CD4-positive, alpha-beta memory T cell (primary cell): ENCODE measurements at regions of chr3 and their contacts with region 1.

Region 1: GRCh38 chr3:188954590-188955208 is 217.1 kb upstream of the TPRG1 start:
- DNase-seq: peak; percentile 48 to 76 (median 68)
- H3K4me3 ChIP-seq: no peak overlapping the region
- H3K4me3 Mint-ChIP-seq: no peak overlapping the region
- H3K27ac ChIP-seq: no peak overlapping the region
- H3K27ac Mint-ChIP-seq: peak overlapping the region in 1 of 7 donors; percentile 45
- H3K4me1 ChIP-seq: no peaks in the 10 kb centered on the region
- H3K4me1 Mint-ChIP-seq: no peaks in the 10 kb centered on the region
- H3K27me3 ChIP-seq: no peaks in the 10 kb centered on the region
- H3K27me3 Mint-ChIP-seq: no peaks in the 10 kb centered on the region

Region 2: DNA sequence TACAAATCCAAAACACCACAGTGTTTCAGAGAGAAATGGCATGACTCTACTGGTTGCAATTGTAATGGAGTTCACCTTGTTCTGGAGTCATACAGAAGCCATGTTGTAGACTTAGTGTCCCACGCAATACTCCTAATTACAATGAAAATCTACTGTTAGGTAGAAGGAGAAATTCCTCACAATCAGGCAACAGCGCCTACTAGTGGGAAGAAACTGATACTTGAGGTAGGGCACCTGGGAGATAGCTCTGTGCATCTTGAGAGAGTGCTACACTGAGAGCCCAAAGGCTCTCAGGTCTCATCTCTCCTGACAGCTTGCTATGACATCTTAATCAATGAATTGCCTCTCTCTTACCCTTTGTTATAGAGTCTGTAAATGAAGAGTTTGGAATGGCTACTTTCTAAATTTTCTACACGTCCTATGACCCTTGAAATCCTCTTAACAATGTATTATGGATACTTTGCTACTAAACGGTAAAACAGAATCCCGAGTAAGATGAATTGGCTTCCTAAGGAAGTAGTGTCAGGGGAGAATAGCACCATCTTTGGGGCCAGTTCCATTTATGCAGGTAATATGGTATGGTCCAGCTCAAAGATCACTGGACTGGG is 205.6 kb before region 1 on chr3:
- CTCF ChIA-PET with region 1: interaction called, 23 read pairs
- POLR2A ChIA-PET with region 1: no interaction called
- intact Hi-C with region 1: loop called (anchors 1 kb)
- DNase-seq: peak; percentile 55 to 63 (median 59)
- H3K4me3 ChIP-seq: no peak overlapping the region
- H3K4me3 Mint-ChIP-seq: no peak overlapping the region
- H3K27ac ChIP-seq: no peak overlapping the region
- H3K27ac Mint-ChIP-seq: no peak overlapping the region
- H3K4me1 ChIP-seq: no peaks in the 10 kb centered on the region
- H3K4me1 Mint-ChIP-seq: peaks cover 0 to 5% (median 0%) of the 10 kb centered on the region in 4 donors
- H3K27me3 ChIP-seq: no peaks in the 10 kb centered on the region
- H3K27me3 Mint-ChIP-seq: no peaks in the 10 kb centered on the region

Region 3: DNA sequence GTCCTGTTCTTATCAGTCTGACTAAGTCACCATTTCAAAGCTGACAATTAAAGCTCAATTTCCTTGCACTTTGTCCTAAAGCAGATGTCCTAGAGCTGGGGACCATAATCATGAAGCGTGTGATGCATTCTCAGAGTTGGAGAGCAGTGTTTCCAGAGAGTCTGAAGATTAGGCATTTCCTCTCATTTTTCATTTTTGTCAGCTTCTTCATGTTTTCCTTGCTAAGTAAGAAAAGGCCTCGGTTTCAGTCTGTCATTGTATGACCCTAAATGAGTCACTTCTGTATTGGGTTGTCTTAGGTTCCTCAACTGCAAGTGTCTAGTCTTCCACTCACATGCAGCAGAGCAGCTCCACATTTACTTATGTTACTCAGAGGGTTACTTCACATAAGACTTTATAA is 40.1 kb before region 1 on chr3:
- CTCF ChIA-PET with region 1: interaction called, 18 read pairs
- POLR2A ChIA-PET with region 1: no interaction called
- intact Hi-C with region 1: no loop called
- DNase-seq: no peak
- H3K4me3 ChIP-seq: no peak overlapping the region
- H3K4me3 Mint-ChIP-seq: no peak overlapping the region
- H3K27ac ChIP-seq: no peak overlapping the region
- H3K27ac Mint-ChIP-seq: peak overlapping the region in 3 of 7 donors; percentile 17 to 62 (median 58)
- H3K4me1 ChIP-seq: peaks cover 22% of the 10 kb centered on the region
- H3K4me1 Mint-ChIP-seq: peaks cover 24 to 37% (median 31%) of the 10 kb centered on the region in 4 donors
- H3K27me3 ChIP-seq: no peaks in the 10 kb centered on the region
- H3K27me3 Mint-ChIP-seq: no peaks in the 10 kb centered on the region

Region 4: DNA sequence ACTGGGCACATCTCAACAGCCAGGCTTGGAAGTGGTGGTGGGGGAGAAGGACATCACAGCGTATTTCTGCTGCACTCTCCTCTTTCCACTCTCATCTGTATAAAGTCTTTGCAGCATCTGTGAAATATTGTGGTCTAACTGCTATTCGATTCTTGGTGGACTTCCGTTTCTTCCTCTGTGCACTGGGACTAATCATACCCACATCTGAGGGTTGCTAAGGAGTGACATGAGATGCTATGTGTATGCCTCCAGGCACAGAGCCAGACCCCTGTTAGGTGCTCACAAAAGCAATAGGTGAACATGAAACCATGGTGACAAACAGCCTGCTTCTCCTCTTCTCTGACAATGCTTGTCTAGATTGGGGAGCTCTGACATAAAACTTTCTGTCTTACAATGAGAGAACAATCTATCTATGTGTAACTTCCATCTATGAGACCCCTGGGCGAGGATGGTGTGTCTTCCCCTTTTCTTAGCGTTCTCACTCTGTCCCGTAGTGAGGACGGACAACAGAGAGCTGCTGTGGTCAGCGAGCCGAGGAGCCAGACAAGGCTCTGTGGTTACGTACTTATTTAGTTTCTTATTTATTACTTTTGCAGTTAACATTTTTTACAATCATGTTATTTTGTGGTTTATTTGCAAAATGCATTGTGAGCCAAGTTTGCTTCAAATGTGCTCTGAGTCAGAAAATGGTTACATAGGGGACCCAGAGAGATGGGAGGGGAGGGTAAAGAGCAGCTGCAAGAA is 20.3 kb after region 1 on chr3:
- CTCF ChIA-PET with region 1: interaction called, 13 read pairs
- POLR2A ChIA-PET with region 1: no interaction called
- intact Hi-C with region 1: no loop called
- DNase-seq: peak; percentile 24 to 52 (median 41)
- H3K4me3 ChIP-seq: peak overlapping the region in 1 of 2 donors; percentile 6
- H3K4me3 Mint-ChIP-seq: peak overlapping the region; percentile 8 to 47 (median 26)
- H3K27ac ChIP-seq: no peak overlapping the region
- H3K27ac Mint-ChIP-seq: peak overlapping the region in 6 of 7 donors; percentile 52 to 90 (median 72)
- H3K4me1 ChIP-seq: peaks cover 16% of the 10 kb centered on the region
- H3K4me1 Mint-ChIP-seq: peaks cover 12 to 35% (median 23%) of the 10 kb centered on the region in 4 donors
- H3K27me3 ChIP-seq: no peaks in the 10 kb centered on the region
- H3K27me3 Mint-ChIP-seq: no peaks in the 10 kb centered on the region

Region 5: GRCh38 chr3:189123595-189124387 is 169.1 kb after region 1 on chr3:
- CTCF ChIA-PET with region 1: interaction called, 13 read pairs
- POLR2A ChIA-PET with region 1: no interaction called
- intact Hi-C with region 1: no loop called
- DNase-seq: no peak
- H3K4me3 ChIP-seq: no peak overlapping the region
- H3K4me3 Mint-ChIP-seq: peak overlapping the region in 6 of 8 donors; percentile 73 to 85 (median 78)
- H3K27ac ChIP-seq: no peak overlapping the region
- H3K27ac Mint-ChIP-seq: peak overlapping the region in 5 of 7 donors; percentile 7 to 93 (median 72)
- H3K4me1 ChIP-seq: peaks cover 45% of the 10 kb centered on the region
- H3K4me1 Mint-ChIP-seq: peaks cover 16 to 66% (median 34%) of the 10 kb centered on the region in 4 donors
- H3K27me3 ChIP-seq: no peaks in the 10 kb centered on the region
- H3K27me3 Mint-ChIP-seq: no peaks in the 10 kb centered on the region

Region 6: DNA sequence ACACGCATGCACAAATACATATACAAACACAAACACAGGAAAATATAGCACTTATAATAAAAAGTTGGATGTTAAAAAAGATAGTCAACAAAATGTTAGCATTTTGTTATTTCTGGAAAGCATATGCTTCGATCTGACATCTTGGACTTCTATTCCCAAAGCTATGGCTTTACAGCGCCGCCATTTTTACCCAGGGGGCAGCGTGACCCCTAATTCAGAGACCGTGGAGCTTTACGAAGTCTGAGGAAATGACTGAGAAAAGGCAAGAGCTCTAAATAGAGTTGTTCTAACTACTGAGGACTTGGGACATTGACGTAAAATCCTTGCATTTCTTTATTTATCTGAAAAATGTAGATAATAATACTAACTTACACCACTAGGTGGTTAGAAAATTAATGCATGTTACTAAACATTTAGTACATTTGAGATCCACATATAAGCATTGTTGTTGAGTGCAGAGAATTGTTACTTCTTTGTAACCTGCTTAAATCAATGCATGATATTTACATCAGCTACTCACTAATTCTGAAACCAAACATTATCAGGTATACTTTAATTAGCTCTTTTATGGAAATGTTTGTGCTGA is 831.9 kb after region 1 on chr3:
- CTCF ChIA-PET with region 1: no interaction called
- POLR2A ChIA-PET with region 1: no interaction called
- intact Hi-C with region 1: no loop called
- DNase-seq: no peak
- H3K4me3 ChIP-seq: no peak overlapping the region
- H3K4me3 Mint-ChIP-seq: no peak overlapping the region
- H3K27ac ChIP-seq: no peak overlapping the region
- H3K27ac Mint-ChIP-seq: no peak overlapping the region
- H3K4me1 ChIP-seq: no peaks in the 10 kb centered on the region
- H3K4me1 Mint-ChIP-seq: peaks cover 5% of the 10 kb centered on the region in 4 donors
- H3K27me3 ChIP-seq: no peaks in the 10 kb centered on the region
- H3K27me3 Mint-ChIP-seq: peaks cover 0 to 2% of the 10 kb centered on the region in 2 donors